Thyroid gland (tissue), 4 donors: ENCODE measurements at regions of chr2 and their contacts with region 1.

Region 1: DNA sequence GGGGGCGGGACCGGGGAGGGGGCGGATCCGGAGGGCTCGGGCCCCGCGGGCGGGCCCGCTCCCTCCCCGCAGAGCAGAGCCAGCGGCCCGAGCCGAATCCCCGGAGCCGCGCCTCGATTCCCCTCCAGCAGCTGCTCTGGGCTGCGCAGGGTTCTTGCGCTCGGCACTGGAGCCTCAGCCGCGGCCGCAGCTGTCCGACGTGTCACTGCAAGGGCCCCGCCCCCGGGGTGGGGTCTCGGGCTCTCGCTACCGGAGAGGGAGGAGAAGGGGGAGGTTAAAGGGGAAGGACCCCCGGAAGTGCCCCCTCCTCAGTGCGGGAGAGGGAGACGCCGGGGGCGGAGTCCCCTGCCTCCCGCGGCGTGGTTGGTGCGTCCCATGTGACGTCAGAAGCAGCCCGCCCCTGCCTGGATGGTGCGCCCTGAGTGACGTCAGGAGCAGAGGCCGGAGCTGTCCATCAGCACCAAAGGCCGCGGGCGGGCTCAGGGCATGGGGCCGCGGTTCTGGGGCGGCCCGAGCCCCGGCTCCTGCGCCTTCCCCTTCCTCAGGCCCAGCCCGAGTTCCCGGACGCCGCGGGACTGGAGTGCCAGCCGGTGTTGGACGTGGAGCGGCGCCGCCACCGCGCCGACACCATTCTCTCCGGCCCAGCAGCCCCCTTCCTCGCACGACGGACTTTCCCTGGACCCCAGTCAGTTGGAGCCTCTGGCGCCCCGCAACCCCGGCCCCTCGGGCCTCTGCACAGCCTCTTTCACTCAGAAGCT is at the starts of genes CHPF and TMEM198:
- DNase-seq: peak; percentile 99
- H3K4me3 ChIP-seq: peak within 1 kb of the TSS; percentile 33 to 83 (median 79)
- H3K27ac ChIP-seq: peak within 1 kb of the TSS; percentile 78 to 91 (median 84)
- H3K4me1 ChIP-seq: peaks cover 21 to 24% of the 10 kb centered on the region in 2 donors
- H3K27me3 ChIP-seq: no peaks in the 10 kb centered on the region
- CTCF ChIP-seq: no peak
- POLR2A ChIP-seq: peak in 1 of 2 donors; percentile 85
- total RNA-seq, gene CHPF: 57.2 to 194 (median 141) TPM
- total RNA-seq, gene TMEM198: 4.6 to 10.9 (median 5.4) TPM

Region 2: GRCh38 chr2:219475697-219476651 is 67.8 kb before region 1 on chr2:
- intact Hi-C with region 1: no loop called
- DNase-seq: peak; percentile 72 to 73
- H3K4me3 ChIP-seq: no peak overlapping the region
- H3K27ac ChIP-seq: no peak overlapping the region
- H3K4me1 ChIP-seq: peaks cover 12 to 18% of the 10 kb centered on the region in 2 donors
- H3K27me3 ChIP-seq: no peaks in the 10 kb centered on the region
- CTCF ChIP-seq: peak; percentile 53 to 85 (median 72)
- POLR2A ChIP-seq: no peak

Region 3: DNA sequence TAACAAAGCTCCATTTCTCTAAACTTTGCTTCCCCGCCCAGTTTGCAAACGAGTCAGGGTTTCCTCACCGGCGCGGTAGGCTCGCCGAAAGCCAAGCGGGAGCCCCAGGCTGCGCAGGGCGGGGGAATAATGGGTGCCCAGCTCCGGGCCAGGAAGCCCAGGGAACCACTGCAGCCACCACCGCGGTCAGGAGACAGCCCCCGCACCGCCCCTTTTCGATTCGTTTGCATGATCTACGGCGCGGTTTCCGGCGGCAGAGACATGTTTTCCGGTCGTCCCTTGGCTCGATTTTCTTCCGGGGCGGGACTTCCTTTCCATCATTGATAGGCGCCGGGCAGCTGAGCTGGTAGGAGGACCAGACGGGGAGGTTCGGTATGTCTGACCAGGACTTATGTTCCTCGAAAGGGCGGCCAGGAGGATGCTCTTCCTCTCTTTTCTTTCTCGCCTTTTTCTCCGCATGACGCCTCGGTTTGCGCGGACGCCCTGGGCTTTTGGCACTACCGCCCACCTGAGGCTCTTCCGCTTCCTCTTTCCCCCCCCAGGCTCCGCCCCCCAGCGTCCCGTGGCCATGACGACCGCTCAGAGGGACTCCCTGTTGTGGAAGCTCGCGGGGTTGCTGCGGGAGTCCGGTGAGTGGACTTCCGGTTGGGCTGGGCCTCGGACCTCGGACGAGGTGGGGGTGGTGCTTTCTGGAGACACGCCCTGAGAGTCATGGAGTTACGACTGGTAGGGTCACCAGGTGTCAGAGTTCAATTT is 54.0 kb after region 1 on chr2 and contains the start of gene STK11IP:
- intact Hi-C with region 1: loop called (anchors 2 kb)
- DNase-seq: peak; percentile 98 to 99
- H3K4me3 ChIP-seq: peak within 1 kb of the TSS; percentile 35 to 77 (median 54)
- H3K27ac ChIP-seq: peak within 1 kb of the TSS; percentile 79 to 91 (median 89)
- H3K4me1 ChIP-seq: peaks cover 0 to 13% of the 10 kb centered on the region in 2 donors
- H3K27me3 ChIP-seq: no peaks in the 10 kb centered on the region
- CTCF ChIP-seq: peak in 1 of 6 experiments; percentile 6
- POLR2A ChIP-seq: peak; percentile 48 to 94
- total RNA-seq, gene STK11IP: 14.6 to 25.0 (median 19.7) TPM

Region 4: GRCh38 chr2:219642465-219643080 is 98.8 kb after region 1 on chr2:
- intact Hi-C with region 1: loop called (anchors 2 kb)
- DNase-seq: peak; percentile 98 to 99
- H3K4me3 ChIP-seq: no peak overlapping the region
- H3K27ac ChIP-seq: no peak overlapping the region
- H3K4me1 ChIP-seq: peaks cover 0 to 18% of the 10 kb centered on the region in 2 donors
- H3K27me3 ChIP-seq: no peaks in the 10 kb centered on the region
- CTCF ChIP-seq: peak; percentile 97 to 100 (median 100)
- POLR2A ChIP-seq: no peak

Region 5: DNA sequence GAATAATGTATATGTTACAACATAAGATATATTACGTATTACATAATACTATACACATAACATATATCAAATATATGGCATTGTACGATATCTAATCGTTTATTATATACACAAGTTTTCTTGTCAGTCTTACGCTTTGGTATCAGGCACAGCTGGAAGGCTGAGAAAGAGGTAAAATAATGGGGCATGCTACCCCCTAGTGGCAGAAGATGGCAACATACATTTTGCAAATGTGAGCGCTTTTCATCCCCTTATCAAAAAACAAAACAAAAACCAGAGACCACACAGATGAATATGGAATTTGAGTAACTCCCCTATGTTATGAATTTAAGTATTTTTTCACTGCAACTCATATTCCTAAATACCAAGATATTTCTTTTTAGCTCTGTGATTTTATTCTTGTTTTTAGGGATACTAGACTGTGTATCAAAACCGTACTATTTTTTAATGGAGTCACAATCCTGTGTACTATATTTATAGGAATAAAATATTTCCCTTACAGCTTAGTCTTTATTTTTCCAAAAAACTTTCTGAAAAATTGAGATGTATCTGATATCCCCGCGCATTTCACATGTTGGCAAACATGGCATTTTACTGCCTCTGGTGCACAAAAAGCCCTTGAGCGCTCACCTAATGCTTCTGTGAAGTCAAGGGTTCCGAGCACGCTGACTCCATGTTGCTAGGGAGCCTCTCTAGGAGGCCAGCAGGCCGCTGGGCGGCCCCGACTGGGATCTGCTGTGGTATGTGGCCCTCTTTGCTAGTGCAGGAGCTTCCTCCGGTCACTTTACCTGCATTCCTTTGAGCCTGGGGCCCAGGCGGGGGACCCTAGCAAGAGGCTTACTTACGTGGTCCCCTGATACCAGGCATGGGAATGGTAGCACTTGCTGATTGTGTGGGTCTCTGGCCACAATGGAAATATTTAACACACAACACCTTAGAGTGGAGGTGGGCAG is 146.2 kb after region 1 on chr2:
- intact Hi-C with region 1: loop called (anchors 5 kb)
- DNase-seq: peak; percentile 38 to 48
- H3K4me3 ChIP-seq: no peak overlapping the region
- H3K27ac ChIP-seq: no peak overlapping the region
- H3K4me1 ChIP-seq: peaks cover 0 to under 1% of the 10 kb centered on the region in 2 donors
- H3K27me3 ChIP-seq: no peaks in the 10 kb centered on the region
- CTCF ChIP-seq: peak; percentile 48 to 79 (median 70)
- POLR2A ChIP-seq: no peak